ENCODE measurements at regions of chr9 and their contacts with region 1.

Region 1: GRCh38 chr9:133030317-133031129 is at the start of gene GTF3C5:
- H3K4me3 ChIP-seq: peak within 1 kb of the TSS; percentile 75
- H3K27ac ChIP-seq: peak within 1 kb of the TSS; percentile 35; the same call in 1 of the 2 replicates
- H3K4me1 ChIP-seq: no peaks in the 10 kb centered on the region
- CTCF ChIP-seq: peak; percentile 46

Region 2: GRCh38 chr9:133004091-133004998 is 26.2 kb before region 1 on chr9:
- CTCF ChIA-PET with region 1: no interaction called
- POLR2A ChIA-PET with region 1: interaction called, 10 read pairs
- H3K4me3 ChIP-seq: no peak overlapping the region
- H3K27ac ChIP-seq: no peak overlapping the region
- H3K4me1 ChIP-seq: no peaks in the 10 kb centered on the region
- CTCF ChIP-seq: no peak

Region 3: DNA sequence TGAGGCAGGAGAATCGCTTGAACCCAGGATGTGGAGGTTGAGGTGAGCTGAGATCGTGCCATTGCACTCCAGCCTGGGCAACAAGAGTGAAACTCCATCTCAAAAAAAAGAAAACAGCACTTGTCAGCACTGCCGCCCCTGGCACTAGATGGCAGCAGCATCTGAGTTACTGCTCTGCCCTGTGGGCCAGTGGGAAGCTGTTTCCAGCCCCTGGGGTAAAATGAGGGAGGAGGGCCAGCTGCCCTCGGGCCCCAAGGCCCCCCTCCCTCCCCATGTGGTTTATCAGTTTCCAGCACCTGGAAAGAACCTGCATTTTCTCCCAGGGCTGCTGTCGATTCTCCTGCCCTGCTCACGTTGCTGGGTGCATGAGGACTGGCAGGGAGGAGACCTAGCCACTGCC is 18.0 kb after region 1 on chr9:
- CTCF ChIA-PET with region 1: interaction called, 6 read pairs
- POLR2A ChIA-PET with region 1: interaction called, 11 read pairs
- H3K4me3 ChIP-seq: no peak overlapping the region
- H3K27ac ChIP-seq: no peak overlapping the region
- H3K4me1 ChIP-seq: no peaks in the 10 kb centered on the region
- CTCF ChIP-seq: peak; percentile 73

Region 4: DNA sequence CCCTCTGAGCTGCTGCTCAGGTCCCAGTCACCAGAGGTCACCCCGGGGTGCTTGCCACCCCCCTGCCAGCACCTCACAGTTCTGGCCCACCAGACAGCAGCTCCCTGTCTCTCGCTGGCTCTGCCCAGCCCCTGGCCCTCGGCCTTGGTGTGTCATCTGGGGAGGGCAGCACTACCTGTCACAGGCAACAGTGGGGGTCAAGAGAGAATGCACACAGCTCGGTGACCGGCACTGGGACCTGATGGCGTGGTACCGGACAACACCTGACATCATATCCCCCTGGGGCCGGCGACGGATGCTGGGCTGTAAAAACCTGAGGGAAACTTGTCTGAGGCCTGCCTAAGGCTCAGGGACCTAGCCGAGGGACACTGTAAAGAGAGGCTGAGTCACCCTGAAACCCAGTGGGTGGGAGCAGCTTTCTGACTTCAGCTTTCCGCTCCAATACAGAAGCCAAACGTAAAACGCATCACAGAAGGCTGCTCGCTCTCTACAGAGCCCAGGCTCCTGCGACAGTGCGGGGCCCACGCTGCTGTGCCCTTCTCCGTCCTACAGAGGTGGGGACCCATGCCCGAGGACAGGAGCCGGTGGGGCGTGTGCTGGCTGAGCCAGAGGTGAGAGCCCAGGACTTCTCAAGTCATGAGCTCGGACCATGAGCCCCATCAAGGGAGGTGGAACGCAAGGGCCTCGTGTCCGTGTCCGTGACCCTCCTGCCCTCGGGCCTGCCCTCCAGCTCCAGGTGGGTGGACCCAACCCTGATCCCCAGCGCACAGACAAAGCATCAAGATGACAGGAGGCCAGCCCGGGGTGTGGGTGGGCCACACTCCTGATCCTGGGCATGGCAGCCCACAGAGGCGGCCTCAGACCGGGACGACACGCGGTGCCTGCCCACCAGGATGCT is 85.2 kb after region 1 on chr9:
- CTCF ChIA-PET with region 1: interaction called, 13 read pairs
- POLR2A ChIA-PET with region 1: interaction called, 24 read pairs
- H3K4me3 ChIP-seq: no peak overlapping the region
- H3K27ac ChIP-seq: no peak overlapping the region
- H3K4me1 ChIP-seq: peaks cover 14% of the 10 kb centered on the region
- CTCF ChIP-seq: no peak

Region 5: GRCh38 chr9:133149126-133150107 is 118.9 kb after region 1 on chr9:
- CTCF ChIA-PET with region 1: interaction called, 117 read pairs
- POLR2A ChIA-PET with region 1: interaction called, 26 read pairs
- H3K4me3 ChIP-seq: peak overlapping the region; percentile 64
- H3K27ac ChIP-seq: peak overlapping the region; percentile 89
- H3K4me1 ChIP-seq: 0 out of 2 replicates have a peak, but pooled peaks cover 3% of the 10 kb centered on the region
- CTCF ChIP-seq: peak; percentile 96

Region 6: GRCh38 chr9:134059661-134060395 is 1029.3 kb after region 1 on chr9:
- CTCF ChIA-PET with region 1: no interaction called
- POLR2A ChIA-PET with region 1: no interaction called
- H3K4me3 ChIP-seq: no peak overlapping the region
- H3K27ac ChIP-seq: no peak overlapping the region
- H3K4me1 ChIP-seq: no peaks in the 10 kb centered on the region
- CTCF ChIP-seq: 0 out of 2 replicates have a peak, but pooled peaks have one; percentile 21

Measured in HEK293 (cell line).